PC-3 (cell line): ENCODE measurements at regions of chr22 and their contacts with region 1.

Region 1: GRCh38 chr22:29394931-29395581 is 6.7 kb upstream of the AP1B1 start:
- DNase-seq: peak; percentile 74
- ATAC-seq: peak; percentile 83
- H3K4me3 ChIP-seq: no peak overlapping the region
- H3K27ac ChIP-seq: no peak overlapping the region
- H3K4me1 ChIP-seq: peaks cover 13% of the 10 kb centered on the region
- H3K27me3 ChIP-seq: no peaks in the 10 kb centered on the region
- CTCF ChIP-seq: peak; percentile 83

Region 2: DNA sequence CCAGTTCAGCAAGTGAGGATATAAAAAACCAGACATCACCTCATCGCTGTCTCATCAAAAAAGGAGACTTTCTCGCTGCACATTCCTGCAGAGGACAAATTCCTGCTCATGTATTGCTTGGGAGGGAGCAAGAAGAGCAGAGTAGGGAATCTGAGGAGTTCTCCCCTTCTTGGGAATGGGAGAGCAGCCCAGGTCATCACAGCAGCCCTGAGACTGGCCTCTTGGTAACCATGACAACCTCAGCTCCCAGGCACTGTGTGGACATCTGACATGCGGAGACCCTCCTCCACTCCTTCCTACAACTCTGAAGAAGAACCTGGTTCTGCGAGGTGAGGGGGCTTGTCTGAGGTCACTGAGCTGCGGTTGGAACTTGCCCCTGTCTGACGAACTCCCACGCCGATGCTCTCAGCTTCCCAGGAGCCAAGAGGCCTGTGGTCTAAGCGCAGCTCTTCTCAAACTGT is 61.2 kb after region 1 on chr22:
- CTCF ChIA-PET with region 1: no interaction called
- POLR2A ChIA-PET with region 1: no interaction called
- intact Hi-C with region 1: no loop called
- DNase-seq: no peak
- ATAC-seq: no peak
- H3K4me3 ChIP-seq: no peak overlapping the region
- H3K27ac ChIP-seq: no peak overlapping the region
- H3K4me1 ChIP-seq: no peaks in the 10 kb centered on the region
- H3K27me3 ChIP-seq: no peaks in the 10 kb centered on the region
- CTCF ChIP-seq: no peak

Region 3: GRCh38 chr22:29524440-29525191 is 129.6 kb after region 1 on chr22:
- CTCF ChIA-PET with region 1: no interaction called
- POLR2A ChIA-PET with region 1: no interaction called
- intact Hi-C with region 1: loop called (anchors 1 kb)
- DNase-seq: peak; percentile 26
- ATAC-seq: peak; percentile 62
- H3K4me3 ChIP-seq: no peak overlapping the region
- H3K27ac ChIP-seq: no peak overlapping the region
- H3K4me1 ChIP-seq: no peaks in the 10 kb centered on the region
- H3K27me3 ChIP-seq: no peaks in the 10 kb centered on the region
- CTCF ChIP-seq: peak; percentile 55